ENCODE measurements at regions of chr5 and their contacts with region 1.

Region 1: DNA sequence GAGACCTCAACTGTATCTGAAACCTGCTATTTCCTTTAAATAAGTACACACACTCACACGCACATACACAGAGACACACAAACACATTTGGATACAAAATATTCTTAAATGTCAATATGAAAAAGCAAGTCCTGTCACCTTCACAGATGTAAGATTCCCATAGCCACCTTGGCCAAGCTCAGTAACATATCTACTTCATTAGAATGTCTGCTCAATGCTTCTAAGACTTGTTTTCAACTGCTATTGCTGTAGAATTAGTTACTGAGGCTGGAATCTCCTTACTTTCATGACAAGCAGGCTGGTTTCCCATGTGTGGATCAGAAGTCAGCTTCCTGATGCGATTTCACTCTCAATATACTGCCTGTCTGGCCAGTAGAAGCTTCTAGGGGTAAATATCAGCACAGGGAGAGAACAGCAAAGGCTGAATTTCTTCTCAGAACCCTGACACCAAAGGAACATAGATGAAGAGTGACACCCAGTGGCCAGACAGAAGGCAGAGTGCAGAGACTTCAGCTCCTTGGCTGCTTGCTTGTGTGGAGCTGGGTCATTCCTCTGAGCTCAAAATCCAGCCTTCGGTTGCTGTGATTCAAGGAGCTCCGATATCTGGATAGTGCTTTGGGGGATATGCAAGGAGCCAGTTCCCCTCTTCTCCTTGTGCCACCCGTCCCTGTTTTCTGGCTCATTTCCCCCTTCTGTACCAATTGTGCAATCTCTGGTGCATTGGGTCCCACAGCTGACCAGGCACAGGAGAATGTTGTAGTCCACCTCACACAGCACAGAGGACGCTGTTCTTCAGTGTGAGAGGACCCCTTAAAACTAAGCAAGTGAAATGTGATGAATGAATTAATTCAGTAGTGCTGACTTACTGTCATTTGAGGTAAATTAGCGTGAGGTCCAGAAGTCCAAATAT is 26.6 kb upstream of the ABLIM3 start:
- DNase-seq: peak; percentile 67
- H3K4me3 Mint-ChIP-seq: no peak overlapping the region
- H3K27ac Mint-ChIP-seq: no peak overlapping the region
- H3K4me1 Mint-ChIP-seq: no peaks in the 10 kb centered on the region
- H3K27me3 Mint-ChIP-seq: peaks cover 4% of the 10 kb centered on the region

Region 2: GRCh38 chr5:148443998-148444397 is 670.7 kb before region 1 on chr5:
- CTCF ChIA-PET with region 1: no interaction called
- intact Hi-C with region 1: loop called (anchors 10 kb)
- DNase-seq: peak; percentile 67
- H3K4me3 Mint-ChIP-seq: no peak overlapping the region
- H3K27ac Mint-ChIP-seq: no peak overlapping the region
- H3K4me1 Mint-ChIP-seq: no peaks in the 10 kb centered on the region
- H3K27me3 Mint-ChIP-seq: no peaks in the 10 kb centered on the region

Region 3: GRCh38 chr5:148740966-148741742 is 373.5 kb before region 1 on chr5:
- CTCF ChIA-PET with region 1: interaction called, 21 read pairs
- intact Hi-C with region 1: no loop called
- DNase-seq: no peak
- H3K4me3 Mint-ChIP-seq: no peak overlapping the region
- H3K27ac Mint-ChIP-seq: no peak overlapping the region
- H3K4me1 Mint-ChIP-seq: no peaks in the 10 kb centered on the region
- H3K27me3 Mint-ChIP-seq: peaks cover 28% of the 10 kb centered on the region

Region 4: DNA sequence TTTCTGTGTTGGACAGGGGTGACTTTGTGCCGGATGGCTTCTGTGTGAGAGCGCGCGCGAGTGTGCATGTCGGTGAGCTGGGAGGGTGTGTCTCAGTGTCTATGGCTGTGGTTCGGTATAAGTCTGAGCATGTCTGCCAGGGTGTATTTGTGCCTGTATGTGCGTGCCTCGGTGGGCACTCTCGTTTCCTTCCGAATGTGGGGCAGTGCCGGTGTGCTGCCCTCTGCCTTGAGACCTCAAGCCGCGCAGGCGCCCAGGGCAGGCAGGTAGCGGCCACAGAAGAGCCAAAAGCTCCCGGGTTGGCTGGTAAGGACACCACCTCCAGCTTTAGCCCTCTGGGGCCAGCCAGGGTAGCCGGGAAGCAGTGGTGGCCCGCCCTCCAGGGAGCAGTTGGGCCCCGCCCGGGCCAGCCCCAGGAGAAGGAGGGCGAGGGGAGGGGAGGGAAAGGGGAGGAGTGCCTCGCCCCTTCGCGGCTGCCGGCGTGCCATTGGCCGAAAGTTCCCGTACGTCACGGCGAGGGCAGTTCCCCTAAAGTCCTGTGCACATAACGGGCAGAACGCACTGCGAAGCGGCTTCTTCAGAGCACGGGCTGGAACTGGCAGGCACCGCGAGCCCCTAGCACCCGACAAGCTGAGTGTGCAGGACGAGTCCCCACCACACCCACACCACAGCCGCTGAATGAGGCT is 288.5 kb before region 1 on chr5 and contains the start of gene ADRB2:
- CTCF ChIA-PET with region 1: no interaction called
- intact Hi-C with region 1: loop called (anchors 5 kb)
- DNase-seq: peak; percentile 90
- H3K4me3 Mint-ChIP-seq: peak within 1 kb of the TSS; percentile 78
- H3K27ac Mint-ChIP-seq: peak within 1 kb of the TSS; percentile 10
- H3K4me1 Mint-ChIP-seq: peaks cover 15% of the 10 kb centered on the region
- H3K27me3 Mint-ChIP-seq: peaks cover 23% of the 10 kb centered on the region
- total RNA-seq, gene ADRB2: 0.21 to 0.32 TPM

Region 5: GRCh38 chr5:148963664-148964063 is 151.0 kb before region 1 on chr5:
- CTCF ChIA-PET with region 1: no interaction called
- intact Hi-C with region 1: loop called (anchors 5 kb)
- DNase-seq: no peak
- H3K4me3 Mint-ChIP-seq: no peak overlapping the region
- H3K27ac Mint-ChIP-seq: no peak overlapping the region
- H3K4me1 Mint-ChIP-seq: peaks cover 2% of the 10 kb centered on the region
- H3K27me3 Mint-ChIP-seq: peaks cover 3% of the 10 kb centered on the region

Region 6: GRCh38 chr5:148998174-148998797 is 116.4 kb before region 1 on chr5:
- CTCF ChIA-PET with region 1: interaction called, 4 read pairs
- intact Hi-C with region 1: loop called (anchors 1 kb)
- DNase-seq: peak; percentile 37
- H3K4me3 Mint-ChIP-seq: no peak overlapping the region
- H3K27ac Mint-ChIP-seq: no peak overlapping the region
- H3K4me1 Mint-ChIP-seq: no peaks in the 10 kb centered on the region
- H3K27me3 Mint-ChIP-seq: peaks cover 28% of the 10 kb centered on the region

Measured in activated naive CD4-positive, alpha-beta T cell treated with anti-CD3 and anti-CD28 coated beads for 36 hours (primary cell).